AG04449 (cell line): ENCODE measurements at regions of chr1 and their contacts with region 1.

Region 1: GRCh38 chr1:176669782-176670181 is 206.8 kb downstream of the PAPPA2 start:
- DNase-seq: no peak
- H3K4me3 ChIP-seq: no peak overlapping the region
- CTCF ChIP-seq: no peak

Region 2: DNA sequence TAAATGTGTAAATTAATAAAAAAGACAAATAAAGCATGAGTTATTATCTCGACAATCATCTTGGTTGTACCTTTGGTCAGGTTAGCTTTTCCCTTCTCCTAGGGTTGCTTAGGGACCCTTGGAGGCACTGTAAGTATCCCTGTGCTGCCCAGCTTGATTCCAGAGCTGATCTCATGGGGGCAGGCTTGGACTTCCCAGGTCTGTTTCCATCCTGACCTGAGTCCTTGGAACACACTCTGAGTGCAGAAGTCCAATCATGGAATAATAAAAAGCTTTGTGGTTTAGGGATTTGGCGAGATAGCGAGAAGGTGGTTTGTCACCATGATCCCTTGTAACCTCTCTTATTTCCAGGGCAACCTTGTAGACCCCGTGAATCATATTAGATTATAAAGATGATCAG is 225.5 kb before region 1 on chr1:
- CTCF ChIA-PET with region 1: no interaction called
- POLR2A ChIA-PET with region 1: no interaction called
- DNase-seq: no peak
- H3K4me3 ChIP-seq: no peak overlapping the region
- CTCF ChIP-seq: no peak

Region 3: DNA sequence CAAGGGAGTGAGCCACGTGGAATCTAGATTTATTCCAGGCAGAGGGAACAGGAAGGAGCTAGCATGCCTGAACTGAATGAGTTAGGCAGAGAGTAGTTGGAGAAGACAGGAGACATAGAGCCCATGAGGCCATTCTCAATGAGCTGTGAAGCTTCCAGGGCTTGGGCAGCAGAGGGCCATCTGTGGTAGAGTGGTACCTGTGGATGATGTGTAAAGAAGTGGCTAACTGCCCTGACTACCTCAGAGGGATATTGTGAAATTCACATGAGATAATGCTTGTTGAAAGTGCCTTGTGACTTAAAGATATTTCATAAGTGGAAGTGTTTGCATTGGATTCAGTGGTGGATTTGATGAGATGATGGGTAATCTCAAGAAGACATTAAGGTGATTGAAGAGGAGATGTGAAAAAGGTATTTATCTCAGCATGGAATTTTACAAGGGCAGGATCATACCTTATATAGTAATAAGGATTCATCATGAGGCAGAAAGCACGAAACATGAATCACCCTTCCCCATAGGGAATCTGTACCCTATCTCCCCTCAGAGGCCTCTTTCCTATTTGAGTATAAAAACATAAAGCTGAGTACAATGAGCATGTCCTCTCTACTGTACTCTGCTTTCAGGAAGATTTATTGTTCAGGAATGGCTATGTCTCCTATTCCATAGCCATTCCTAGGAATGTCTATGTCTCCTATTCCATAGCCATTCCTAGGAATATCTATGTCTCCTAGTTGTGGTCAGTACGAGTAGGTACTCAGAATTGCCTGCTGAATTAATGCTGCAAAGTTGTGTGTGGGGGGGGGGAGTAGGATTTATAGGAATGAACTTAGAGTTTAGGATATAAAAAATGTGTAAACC is 60.0 kb before region 1 on chr1:
- CTCF ChIA-PET with region 1: no interaction called
- POLR2A ChIA-PET with region 1: no interaction called
- DNase-seq: no peak
- H3K4me3 ChIP-seq: no peak overlapping the region
- CTCF ChIP-seq: no peak

Region 4: GRCh38 chr1:176643536-176643935 is 26.2 kb before region 1 on chr1:
- CTCF ChIA-PET with region 1: no interaction called
- POLR2A ChIA-PET with region 1: no interaction called
- DNase-seq: no peak
- H3K4me3 ChIP-seq: no peak overlapping the region
- CTCF ChIP-seq: no peak

Region 5: GRCh38 chr1:176691251-176692228 is 21.8 kb after region 1 on chr1:
- CTCF ChIA-PET with region 1: interaction called, 11 read pairs
- POLR2A ChIA-PET with region 1: no interaction called
- DNase-seq: peak; percentile 17
- H3K4me3 ChIP-seq: no peak overlapping the region
- CTCF ChIP-seq: peak; percentile 68

Region 6: DNA sequence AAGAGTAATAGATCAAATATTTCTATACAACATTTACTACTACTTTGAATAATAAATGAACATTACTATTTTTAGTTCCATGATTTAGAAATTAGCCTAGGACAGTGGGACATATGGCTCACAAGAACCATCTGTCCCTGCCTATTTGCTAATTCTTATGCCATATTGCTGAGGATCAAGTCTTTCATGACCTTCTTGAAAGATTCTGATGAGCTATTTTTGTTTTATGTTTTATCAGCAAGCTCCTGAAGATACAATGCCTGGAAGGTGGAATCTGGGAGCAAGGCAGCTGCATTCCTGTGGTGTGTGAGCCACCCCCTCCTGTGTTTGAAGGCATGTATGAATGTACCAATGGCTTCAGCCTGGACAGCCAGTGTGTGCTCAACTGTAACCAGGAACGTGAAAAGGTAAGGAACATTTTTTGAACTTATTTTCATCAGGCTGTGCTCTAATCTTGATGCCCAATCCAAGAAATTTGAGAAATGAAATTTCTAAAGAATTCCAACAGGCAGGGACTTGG is 119.8 kb after region 1 on chr1:
- CTCF ChIA-PET with region 1: no interaction called
- POLR2A ChIA-PET with region 1: no interaction called
- DNase-seq: no peak
- H3K4me3 ChIP-seq: no peak overlapping the region
- CTCF ChIP-seq: no peak